Naive thymus-derived CD4-positive, alpha-beta T cell (primary cell): ENCODE measurements at regions of chr9 and their contacts with region 1.

Region 1: DNA sequence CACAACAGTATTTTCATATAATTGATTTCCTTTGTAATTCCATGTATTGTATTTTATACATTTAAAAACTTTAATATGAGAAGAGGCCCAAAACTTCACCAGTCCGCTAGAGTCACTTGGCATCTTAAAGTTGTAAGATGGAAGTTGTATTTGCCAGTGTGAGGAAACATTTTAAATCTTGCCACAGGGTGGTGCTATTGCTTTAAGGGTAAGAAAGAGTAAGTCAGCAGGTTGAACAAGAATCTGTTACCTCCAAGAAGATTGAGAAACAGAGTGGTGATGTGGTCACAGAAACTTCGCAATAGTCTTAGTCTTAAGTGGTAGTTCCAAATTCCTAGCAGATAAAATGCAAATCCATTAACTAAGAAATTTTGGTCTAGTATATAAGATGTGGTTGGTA is 39.8 kb upstream of the RANBP6 start:
- DNase-seq: peak in 7 of 9 donors; percentile 42 to 69 (median 63)
- ATAC-seq: peak; percentile 86
- H3K4me3 ChIP-seq: no peak overlapping the region
- H3K4me3 Mint-ChIP-seq: no peak overlapping the region
- H3K27ac ChIP-seq: no peak overlapping the region
- H3K27ac Mint-ChIP-seq: peak overlapping the region in 2 of 9 donors; percentile 16 to 47
- H3K4me1 ChIP-seq: no peaks in the 10 kb centered on the region
- H3K4me1 Mint-ChIP-seq: peaks cover 0 to 7% (median 0%) of the 10 kb centered on the region in 7 donors
- H3K27me3 ChIP-seq: no peaks in the 10 kb centered on the region
- H3K27me3 Mint-ChIP-seq: peaks cover 0 to 19% (median 5%) of the 10 kb centered on the region in 5 donors

Region 2: DNA sequence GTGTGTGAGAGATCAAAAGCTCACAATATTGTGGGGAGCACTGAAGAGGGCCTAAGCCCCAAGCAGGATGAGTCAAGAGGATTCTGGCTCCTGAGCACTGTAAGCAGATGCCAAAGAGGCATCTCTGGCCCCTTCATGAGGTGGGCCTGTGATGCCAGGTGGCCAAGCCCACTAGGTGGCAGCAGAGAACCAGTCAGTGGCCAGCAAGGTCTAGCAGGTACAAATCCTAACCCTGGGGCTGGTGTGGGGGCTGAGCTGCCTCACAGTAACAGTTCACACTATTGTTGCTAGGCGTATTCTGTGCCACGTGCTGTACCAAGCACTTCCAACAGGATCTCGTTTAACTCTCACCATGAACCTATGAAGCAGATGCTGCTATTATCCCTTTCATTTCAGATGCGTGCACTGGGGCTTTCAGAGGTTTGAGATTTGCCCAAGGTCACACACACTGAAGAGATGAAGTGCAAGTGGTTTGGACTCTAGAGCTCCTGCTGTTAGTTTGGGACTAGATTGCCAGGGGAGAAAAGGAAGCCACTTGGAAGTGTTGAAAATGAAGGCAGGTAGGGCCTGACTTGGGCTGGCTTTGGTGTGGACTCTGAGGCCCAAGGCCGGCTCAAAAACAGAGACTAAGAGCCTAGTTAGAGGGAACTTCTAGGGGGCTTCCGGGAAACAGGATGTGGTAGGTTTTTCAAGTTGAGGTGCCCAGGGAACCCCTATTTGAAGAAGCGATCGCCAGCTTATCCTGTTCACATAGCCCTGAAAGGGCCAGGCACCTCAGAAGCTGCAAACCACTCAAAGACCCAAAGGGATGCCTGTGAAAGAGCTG is 168.9 kb before region 1 on chr9:
- CTCF ChIA-PET with region 1: interaction called, 28 read pairs
- POLR2A ChIA-PET with region 1: no interaction called
- intact Hi-C with region 1: loop called (anchors 1 kb)
- DNase-seq: peak; percentile 45 to 80 (median 64)
- ATAC-seq: peak; percentile 94
- H3K4me3 ChIP-seq: no peak overlapping the region
- H3K4me3 Mint-ChIP-seq: no peak overlapping the region
- H3K27ac ChIP-seq: no peak overlapping the region
- H3K27ac Mint-ChIP-seq: peak overlapping the region in 4 of 9 donors; percentile 11 to 64 (median 34)
- H3K4me1 ChIP-seq: peaks cover 0 to 3% of the 10 kb centered on the region in 2 donors
- H3K4me1 Mint-ChIP-seq: peaks cover 0 to 14% (median 7%) of the 10 kb centered on the region in 7 donors
- H3K27me3 ChIP-seq: no peaks in the 10 kb centered on the region
- H3K27me3 Mint-ChIP-seq: no peaks in the 10 kb centered on the region

Region 3: GRCh38 chr9:6015278-6016157 is 39.7 kb before region 1 on chr9 and contains the start of gene RANBP6:
- CTCF ChIA-PET with region 1: no interaction called
- POLR2A ChIA-PET with region 1: no interaction called
- intact Hi-C with region 1: loop called in 1 of 2 experiments (anchors 2 kb)
- DNase-seq: peak; percentile 81 to 92 (median 91)
- ATAC-seq: peak; percentile 100
- H3K4me3 ChIP-seq: peak within 1 kb of the TSS; percentile 65
- H3K4me3 Mint-ChIP-seq: peak within 1 kb of the TSS; percentile 91 to 99 (median 96)
- H3K27ac ChIP-seq: peak within 1 kb of the TSS; percentile 75
- H3K27ac Mint-ChIP-seq: peak within 1 kb of the TSS; percentile 91 to 100 (median 99)
- H3K4me1 ChIP-seq: peaks cover 8 to 11% of the 10 kb centered on the region in 2 donors
- H3K4me1 Mint-ChIP-seq: peaks cover 13 to 49% (median 38%) of the 10 kb centered on the region in 7 donors
- H3K27me3 ChIP-seq: no peaks in the 10 kb centered on the region
- H3K27me3 Mint-ChIP-seq: no peaks in the 10 kb centered on the region
- total RNA-seq, gene RANBP6: 21.9 to 34.3 (median 30.3) TPM

Region 4: GRCh38 chr9:6230037-6230760 is 175.0 kb after region 1 on chr9:
- CTCF ChIA-PET with region 1: no interaction called
- POLR2A ChIA-PET with region 1: no interaction called
- intact Hi-C with region 1: no loop called
- DNase-seq: no peak
- ATAC-seq: no peak
- H3K4me3 ChIP-seq: no peak overlapping the region
- H3K4me3 Mint-ChIP-seq: no peak overlapping the region
- H3K27ac ChIP-seq: no peak overlapping the region
- H3K27ac Mint-ChIP-seq: no peak overlapping the region
- H3K4me1 ChIP-seq: no peaks in the 10 kb centered on the region
- H3K4me1 Mint-ChIP-seq: no peaks in the 10 kb centered on the region
- H3K27me3 ChIP-seq: no peaks in the 10 kb centered on the region
- H3K27me3 Mint-ChIP-seq: peaks cover 9 to 23% (median 12%) of the 10 kb centered on the region in 5 donors

Region 5: DNA sequence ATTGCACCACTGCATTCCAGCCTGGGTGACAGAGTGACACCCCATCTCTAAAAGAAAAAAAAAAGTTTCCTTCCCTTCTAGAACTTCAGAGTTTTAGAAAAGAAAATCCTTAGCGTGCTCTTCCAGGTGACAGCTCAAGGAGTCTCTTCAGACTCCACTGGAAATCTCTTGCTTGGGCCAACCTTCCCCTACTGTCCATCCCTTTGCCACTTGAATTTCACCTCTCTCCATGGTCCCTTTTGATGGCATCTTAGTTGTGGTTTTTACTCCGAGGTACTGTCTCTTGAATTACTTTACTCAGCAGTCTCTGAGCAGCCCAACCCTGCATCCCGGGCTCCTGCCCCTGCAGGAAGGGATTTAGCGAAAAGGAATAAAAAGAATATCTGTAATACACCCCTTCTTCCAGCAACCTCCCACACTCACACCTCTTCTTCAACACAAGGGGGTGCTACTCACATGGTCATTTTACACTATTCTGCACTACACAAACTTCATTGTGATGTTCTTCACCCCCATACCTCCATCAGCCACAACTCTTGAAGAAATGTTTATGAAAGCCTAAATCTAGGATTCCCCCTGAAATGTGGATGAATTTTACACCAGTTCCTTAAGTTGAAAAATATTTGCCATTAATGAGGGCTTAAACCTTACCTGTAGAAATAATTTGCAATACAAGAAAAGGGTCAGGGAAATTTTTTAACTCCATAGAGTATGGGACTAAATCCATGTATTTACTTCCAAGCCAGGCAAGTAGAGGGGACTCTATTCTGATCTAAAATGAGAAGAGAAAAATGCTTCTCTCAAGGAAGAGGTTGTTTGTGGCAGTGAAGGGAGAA is 298.9 kb after region 1 on chr9:
- CTCF ChIA-PET with region 1: no interaction called
- POLR2A ChIA-PET with region 1: no interaction called
- intact Hi-C with region 1: loop called (anchors 1 to 5 kb)
- DNase-seq: peak in 8 of 9 donors; percentile 22 to 69 (median 58)
- ATAC-seq: peak; percentile 92
- H3K4me3 ChIP-seq: no peak overlapping the region
- H3K4me3 Mint-ChIP-seq: no peak overlapping the region
- H3K27ac ChIP-seq: no peak overlapping the region
- H3K27ac Mint-ChIP-seq: no peak overlapping the region
- H3K4me1 ChIP-seq: no peaks in the 10 kb centered on the region
- H3K4me1 Mint-ChIP-seq: peaks cover 0 to 16% (median 0%) of the 10 kb centered on the region in 7 donors
- H3K27me3 ChIP-seq: no peaks in the 10 kb centered on the region
- H3K27me3 Mint-ChIP-seq: peaks cover 5 to 19% (median 9%) of the 10 kb centered on the region in 5 donors